Caco-2 (cell line): ENCODE measurements at regions of chr5 and their contacts with region 1.

Region 1: GRCh38 chr5:154520861-154521453 is 42.9 kb upstream of the HAND1 start:
- DNase-seq: peak; percentile 77 to 78
- H3K4me3 ChIP-seq: no peak overlapping the region
- H3K4me3 Mint-ChIP-seq: no peak overlapping the region
- H3K27ac Mint-ChIP-seq: no peak overlapping the region
- H3K4me1 ChIP-seq: peaks cover 15% of the 10 kb centered on the region
- H3K4me1 Mint-ChIP-seq: peaks cover 18% of the 10 kb centered on the region
- H3K27me3 ChIP-seq: no peaks in the 10 kb centered on the region
- H3K27me3 Mint-ChIP-seq: no peaks in the 10 kb centered on the region
- CTCF ChIP-seq: peak; percentile 83 to 95

Region 2: DNA sequence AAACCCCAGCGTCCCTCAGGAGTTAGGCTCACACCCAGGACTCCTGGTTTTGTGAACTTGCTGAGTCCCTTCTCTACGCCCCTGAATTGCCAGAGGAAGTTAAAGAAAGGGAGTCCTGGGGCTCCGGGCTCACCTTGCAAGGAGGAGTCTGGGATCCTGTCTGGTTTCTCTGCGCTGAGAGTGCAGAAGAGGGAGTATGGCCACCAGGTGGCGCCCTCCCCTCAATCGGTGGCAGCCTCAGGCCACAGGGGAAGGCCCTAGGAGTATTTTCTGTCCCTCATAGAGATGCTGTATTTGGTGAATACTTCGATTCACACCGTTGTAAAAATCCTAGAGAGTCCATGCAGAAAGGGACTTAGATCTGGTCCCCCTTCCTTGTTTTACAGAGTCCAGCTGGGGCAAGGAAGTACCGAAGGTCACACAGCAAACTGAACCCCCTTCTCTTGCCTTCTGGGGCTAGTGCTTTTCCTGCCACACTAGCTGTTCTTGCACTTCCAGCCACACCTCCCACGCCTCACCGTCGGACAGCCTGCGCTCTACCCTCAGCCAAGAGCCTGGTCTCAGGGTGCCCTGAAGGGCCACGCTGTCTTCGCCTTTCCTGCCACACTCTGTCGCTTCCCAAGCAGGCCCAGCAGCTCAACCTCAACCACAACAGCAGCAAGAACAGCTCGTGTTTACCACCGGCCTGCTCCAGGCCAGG is 53.2 kb before region 1 on chr5:
- CTCF ChIA-PET with region 1: interaction called, 4 read pairs
- POLR2A ChIA-PET with region 1: no interaction called
- intact Hi-C with region 1: loop called (anchors 1 kb)
- DNase-seq: peak; percentile 74 to 87
- H3K4me3 ChIP-seq: no peak overlapping the region
- H3K4me3 Mint-ChIP-seq: no peak overlapping the region
- H3K27ac Mint-ChIP-seq: no peak overlapping the region
- H3K4me1 ChIP-seq: peaks cover 8% of the 10 kb centered on the region
- H3K4me1 Mint-ChIP-seq: peaks cover 11% of the 10 kb centered on the region
- H3K27me3 ChIP-seq: no peaks in the 10 kb centered on the region; the same call in 1 of the 2 replicates
- H3K27me3 Mint-ChIP-seq: no peaks in the 10 kb centered on the region
- CTCF ChIP-seq: peak; percentile 93 to 94

Region 3: DNA sequence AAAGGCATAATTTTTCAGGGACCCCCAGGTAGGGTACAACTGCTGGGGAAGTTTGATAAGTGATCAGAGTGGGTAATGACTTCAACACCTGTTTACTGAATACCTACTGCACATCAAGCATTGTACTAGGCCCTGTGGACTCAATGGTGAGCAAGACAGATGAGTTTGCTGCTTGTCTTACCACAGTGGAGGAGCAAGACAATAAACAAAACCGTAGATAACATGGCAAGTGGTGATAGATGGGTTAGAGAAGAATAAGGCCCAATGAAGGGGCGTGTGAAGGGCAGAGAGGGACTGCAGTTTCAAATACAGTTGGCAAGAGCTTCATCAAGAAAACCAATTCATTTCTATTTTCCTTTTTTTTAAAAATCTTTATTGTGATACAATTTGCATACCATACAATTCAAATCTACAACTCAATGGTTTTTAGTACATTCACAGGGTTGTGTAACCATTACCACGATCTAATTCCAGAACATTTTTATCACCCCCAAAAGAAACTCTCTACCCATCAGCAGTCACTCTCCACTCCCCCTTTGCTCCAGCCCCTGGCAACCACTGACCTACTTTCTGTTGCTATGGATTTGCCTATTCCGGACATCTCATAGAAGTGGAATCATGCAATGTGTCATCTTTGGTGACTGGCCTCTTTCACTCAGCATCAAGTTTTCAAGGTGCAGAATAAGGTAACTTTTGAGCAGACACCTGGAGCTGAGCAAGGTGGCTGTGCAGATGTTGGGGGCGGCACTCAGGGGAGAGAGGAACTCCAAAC is 11.0 kb before region 1 on chr5:
- CTCF ChIA-PET with region 1: interaction called, 10 read pairs
- POLR2A ChIA-PET with region 1: no interaction called
- intact Hi-C with region 1: no loop called
- DNase-seq: no peak
- H3K4me3 ChIP-seq: no peak overlapping the region
- H3K4me3 Mint-ChIP-seq: no peak overlapping the region
- H3K27ac Mint-ChIP-seq: no peak overlapping the region
- H3K4me1 ChIP-seq: no peaks in the 10 kb centered on the region
- H3K4me1 Mint-ChIP-seq: no peaks in the 10 kb centered on the region
- H3K27me3 ChIP-seq: no peaks in the 10 kb centered on the region; the same call in 1 of the 2 replicates
- H3K27me3 Mint-ChIP-seq: peaks cover 9% of the 10 kb centered on the region
- CTCF ChIP-seq: no peak

Region 4: DNA sequence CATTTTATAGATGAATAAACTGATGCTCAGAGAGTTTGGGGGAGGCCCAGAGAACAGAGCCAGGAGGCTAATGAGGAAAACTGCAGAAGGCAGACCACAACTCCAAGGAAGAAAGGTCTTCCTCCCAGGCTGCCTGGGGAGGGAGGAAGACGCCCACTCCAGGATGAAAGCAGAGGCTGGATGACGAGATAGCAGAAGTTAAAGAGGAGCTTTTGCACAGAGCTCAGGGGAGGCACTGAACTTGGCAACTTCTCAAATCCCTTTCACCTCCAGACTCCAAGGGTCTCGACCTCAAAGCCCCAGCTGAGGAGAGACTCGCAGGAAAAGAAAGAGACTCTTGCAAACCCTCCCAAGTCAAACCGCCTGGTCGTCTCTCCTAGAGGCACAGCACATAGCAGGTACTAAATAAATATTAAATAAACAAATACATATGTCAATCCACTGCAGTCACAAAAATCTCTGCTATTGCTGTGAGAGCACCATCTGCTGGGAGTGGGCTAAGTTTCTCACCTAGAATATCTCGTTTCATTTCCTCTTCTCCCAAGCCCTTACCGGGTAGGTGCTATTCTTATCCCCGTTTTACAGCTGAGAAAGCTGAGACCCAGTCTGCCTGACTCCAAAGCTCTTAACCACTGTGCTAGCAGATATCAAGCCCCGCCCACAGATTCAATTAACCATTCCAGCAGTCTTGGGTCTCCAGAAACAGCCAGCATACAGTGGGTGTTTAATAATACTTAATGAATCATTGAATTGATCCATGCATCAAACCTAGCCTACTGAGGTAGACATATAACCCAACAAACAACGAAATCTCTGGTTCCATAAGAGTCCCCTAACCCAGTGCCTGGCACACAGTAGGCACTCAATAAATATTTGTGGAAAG is 54.8 kb after region 1 on chr5:
- CTCF ChIA-PET with region 1: interaction called, 9 read pairs
- POLR2A ChIA-PET with region 1: no interaction called
- intact Hi-C with region 1: loop called (anchors 2 kb)
- DNase-seq: peak in 1 of 2 experiments; percentile 12
- H3K4me3 ChIP-seq: no peak overlapping the region
- H3K4me3 Mint-ChIP-seq: no peak overlapping the region
- H3K27ac Mint-ChIP-seq: no peak overlapping the region
- H3K4me1 ChIP-seq: peaks cover 5% of the 10 kb centered on the region; the same call in 1 of the 2 replicates
- H3K4me1 Mint-ChIP-seq: no peaks in the 10 kb centered on the region
- H3K27me3 ChIP-seq: no peaks in the 10 kb centered on the region
- H3K27me3 Mint-ChIP-seq: peaks cover 5% of the 10 kb centered on the region
- CTCF ChIP-seq: peak in 1 of 2 experiments; percentile 14

Region 5: GRCh38 chr5:154610321-154611154 is 89.6 kb after region 1 on chr5:
- CTCF ChIA-PET with region 1: interaction called, 16 read pairs
- POLR2A ChIA-PET with region 1: no interaction called
- intact Hi-C with region 1: loop called (anchors 1 kb)
- DNase-seq: peak; percentile 82 to 84
- H3K4me3 ChIP-seq: peak overlapping the region; percentile 33
- H3K4me3 Mint-ChIP-seq: peak overlapping the region; percentile 60
- H3K27ac Mint-ChIP-seq: no peak overlapping the region
- H3K4me1 ChIP-seq: peaks cover 19% of the 10 kb centered on the region
- H3K4me1 Mint-ChIP-seq: peaks cover 18% of the 10 kb centered on the region
- H3K27me3 ChIP-seq: no peaks in the 10 kb centered on the region; the same call in 1 of the 2 replicates
- H3K27me3 Mint-ChIP-seq: peaks cover 8% of the 10 kb centered on the region
- CTCF ChIP-seq: peak; percentile 95 to 99

Region 6: DNA sequence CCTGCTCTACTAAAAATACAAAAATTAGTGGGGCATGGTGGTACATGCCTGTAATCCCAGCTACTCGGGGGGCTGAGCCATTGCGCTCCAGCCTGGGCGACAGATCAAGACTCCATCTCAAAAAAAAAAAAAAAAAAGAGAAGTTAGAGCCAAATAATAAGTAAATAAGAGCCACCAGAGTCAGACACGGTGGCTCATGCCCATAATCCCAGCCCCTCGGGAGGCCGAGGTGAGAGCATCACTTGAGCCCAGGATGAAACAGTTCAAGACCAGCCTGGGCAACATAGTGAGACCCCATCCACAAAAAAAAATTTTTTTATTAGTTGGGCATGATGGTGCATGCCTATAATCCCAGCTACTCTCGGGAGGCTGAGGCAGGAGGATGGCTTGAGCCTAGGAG is 148.4 kb after region 1 on chr5:
- CTCF ChIA-PET with region 1: no interaction called
- POLR2A ChIA-PET with region 1: no interaction called
- intact Hi-C with region 1: no loop called
- DNase-seq: no peak
- H3K4me3 ChIP-seq: no peak overlapping the region
- H3K4me3 Mint-ChIP-seq: no peak overlapping the region
- H3K27ac Mint-ChIP-seq: no peak overlapping the region
- H3K4me1 ChIP-seq: no peaks in the 10 kb centered on the region
- H3K4me1 Mint-ChIP-seq: no peaks in the 10 kb centered on the region
- H3K27me3 ChIP-seq: no peaks in the 10 kb centered on the region
- H3K27me3 Mint-ChIP-seq: no peaks in the 10 kb centered on the region
- CTCF ChIP-seq: no peak